Activated naive CD4-positive, alpha-beta T cell treated with anti-CD3 and anti-CD28 coated beads for 36 hours (primary cell): ENCODE measurements at regions of chr3 and their contacts with region 1.

Region 1: DNA sequence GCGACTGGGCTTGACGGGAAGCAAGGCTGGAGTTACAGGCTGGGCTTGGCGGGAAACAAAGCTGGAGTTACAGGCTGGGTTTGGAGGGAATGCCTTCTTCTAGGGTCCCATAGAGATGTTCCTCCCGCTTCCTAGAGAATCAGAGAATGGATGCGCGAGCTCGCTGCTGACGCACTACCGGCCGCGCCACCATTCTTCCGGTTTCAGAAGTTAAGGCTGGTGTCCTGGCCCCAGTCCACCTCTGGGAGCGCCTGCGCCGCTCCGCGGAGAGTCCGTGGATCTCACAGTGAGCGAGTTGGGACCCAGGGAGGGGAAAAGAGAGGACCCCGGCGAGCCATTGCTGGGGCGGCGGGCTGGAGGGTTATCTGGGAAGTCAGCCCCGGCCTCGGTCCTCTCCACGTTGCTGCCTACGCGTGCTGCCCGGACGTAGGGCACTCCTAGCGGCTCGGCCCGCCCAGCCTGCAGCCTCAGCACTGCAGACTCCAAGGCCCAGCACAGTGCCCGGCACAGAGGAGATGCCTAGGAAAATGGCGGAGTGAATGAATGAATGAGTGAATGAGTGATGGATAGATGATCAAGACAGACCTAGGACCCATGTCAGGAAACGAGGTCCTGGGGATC is at the start of gene ZNF502:
- DNase-seq: peak; percentile 72
- H3K4me3 Mint-ChIP-seq: peak within 1 kb of the TSS; percentile 81
- H3K27ac Mint-ChIP-seq: peak within 1 kb of the TSS; percentile 60
- H3K4me1 Mint-ChIP-seq: peaks cover 15% of the 10 kb centered on the region
- H3K27me3 Mint-ChIP-seq: peaks cover 13% of the 10 kb centered on the region
- total RNA-seq, gene ZNF502: 0.62 to 1.0 TPM

Region 2: DNA sequence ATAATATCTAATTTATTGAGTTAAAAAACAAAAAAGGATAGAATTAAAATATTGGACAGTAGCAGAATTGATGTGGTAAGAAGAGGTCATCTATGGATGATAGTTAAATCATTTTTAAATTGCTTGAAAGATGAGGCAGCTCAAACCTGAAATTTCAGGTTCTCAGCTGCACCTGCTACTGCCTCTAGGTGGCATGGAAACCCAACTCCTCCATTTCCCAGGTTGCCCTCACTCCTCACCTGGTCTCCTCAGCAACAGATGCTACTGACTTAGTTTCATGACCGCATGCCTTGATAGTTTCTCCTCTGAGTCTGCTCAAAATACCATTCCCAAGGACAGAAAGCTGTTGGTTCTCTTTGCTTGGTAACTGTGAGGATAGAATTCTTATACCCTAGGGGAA is 873.7 kb before region 1 on chr3:
- CTCF ChIA-PET with region 1: no interaction called
- intact Hi-C with region 1: no loop called
- DNase-seq: no peak
- H3K4me3 Mint-ChIP-seq: no peak overlapping the region
- H3K27ac Mint-ChIP-seq: no peak overlapping the region
- H3K4me1 Mint-ChIP-seq: no peaks in the 10 kb centered on the region
- H3K27me3 Mint-ChIP-seq: peaks cover 17% of the 10 kb centered on the region

Region 3: GRCh38 chr3:44624749-44625480 is 87.7 kb before region 1 on chr3 and contains the start of gene ZNF197:
- CTCF ChIA-PET with region 1: no interaction called
- intact Hi-C with region 1: loop called (anchors 5 kb)
- DNase-seq: peak; percentile 77
- H3K4me3 Mint-ChIP-seq: peak within 1 kb of the TSS; percentile 88
- H3K27ac Mint-ChIP-seq: peak within 1 kb of the TSS; percentile 79
- H3K4me1 Mint-ChIP-seq: peaks cover 28% of the 10 kb centered on the region
- H3K27me3 Mint-ChIP-seq: no peaks in the 10 kb centered on the region
- total RNA-seq, gene ZNF197: 7.7 to 8.4 TPM

Region 4: GRCh38 chr3:44729384-44729910 is 16.9 kb after region 1 on chr3 and contains the start of gene ZNF501:
- CTCF ChIA-PET with region 1: interaction called, 7 read pairs
- intact Hi-C with region 1: loop called (anchors 1 kb)
- DNase-seq: peak; percentile 94
- H3K4me3 Mint-ChIP-seq: peak within 1 kb of the TSS; percentile 90
- H3K27ac Mint-ChIP-seq: peak within 1 kb of the TSS; percentile 73
- H3K4me1 Mint-ChIP-seq: peaks cover 9% of the 10 kb centered on the region
- H3K27me3 Mint-ChIP-seq: no peaks in the 10 kb centered on the region
- total RNA-seq, gene ZNF501: 1.6 to 2.7 TPM